Prostate gland (tissue), 2 donors: ENCODE measurements at regions of chr4 and their contacts with region 1.

Region 1: DNA sequence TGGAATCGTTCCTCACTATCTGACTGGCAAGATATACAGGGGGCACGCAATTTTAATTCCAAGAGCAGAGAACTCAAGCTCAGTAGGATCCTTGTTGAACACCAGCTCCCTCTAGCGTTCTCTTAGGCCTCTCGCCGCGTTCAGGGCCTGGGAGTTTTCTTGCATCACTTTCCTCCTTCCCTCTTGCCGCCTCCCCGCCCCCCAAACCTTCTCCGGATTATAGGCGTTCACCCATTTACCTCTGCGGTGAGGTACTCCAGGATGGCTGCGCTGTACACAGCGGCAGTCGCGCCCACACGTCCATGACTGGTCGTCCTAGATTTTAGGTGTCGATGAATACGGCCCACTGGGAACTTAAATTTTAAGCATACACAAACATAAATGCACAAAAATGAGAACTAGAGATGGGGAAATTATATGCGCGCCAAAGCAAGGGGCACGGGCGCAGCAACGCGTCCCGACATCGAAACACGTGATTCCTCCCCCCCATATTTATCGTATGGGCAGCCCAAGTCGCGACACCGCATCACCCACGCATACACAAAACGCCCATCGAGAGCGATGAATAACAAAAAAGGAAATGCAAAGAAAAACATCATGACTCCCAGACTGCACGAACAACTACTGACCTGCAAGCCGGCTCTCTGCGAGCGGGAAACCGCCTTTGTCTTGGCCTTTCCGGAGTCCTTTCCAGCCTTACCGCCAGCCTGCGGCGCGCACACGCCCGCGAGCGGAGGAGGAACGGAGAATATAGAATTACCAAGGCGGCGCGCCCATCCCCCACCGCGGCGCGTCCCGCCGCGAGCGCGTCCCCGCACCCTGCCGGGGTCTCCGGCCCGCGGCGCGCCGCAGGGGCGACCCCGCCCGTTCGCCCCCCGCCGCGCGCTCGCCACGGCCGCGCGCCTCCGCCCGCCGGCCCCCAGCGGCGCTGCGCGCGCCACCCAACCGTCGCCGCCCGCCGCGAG is 759 bp downstream of the H2AZ1 start:
- DNase-seq: peak; percentile 93
- H3K4me3 ChIP-seq: peak overlapping the region; percentile 72 to 82
- H3K27ac ChIP-seq: peak overlapping the region; percentile 94 to 97
- H3K4me1 ChIP-seq: peaks cover 6% of the 10 kb centered on the region
- H3K27me3 ChIP-seq: no peaks in the 10 kb centered on the region
- CTCF ChIP-seq: peak in 3 of 4 experiments; percentile 81 to 88 (median 88)
- POLR2A ChIP-seq: peak; percentile 43

Region 2: GRCh38 chr4:99885063-99885664 is 64.2 kb before region 1 on chr4:
- intact Hi-C with region 1: loop called (anchors 2 kb)
- DNase-seq: no peak
- H3K4me3 ChIP-seq: no peak overlapping the region
- H3K27ac ChIP-seq: no peak overlapping the region
- H3K4me1 ChIP-seq: no peaks in the 10 kb centered on the region
- H3K27me3 ChIP-seq: peaks cover 2% of the 10 kb centered on the region
- CTCF ChIP-seq: peak in 3 of 4 experiments; percentile 33 to 73 (median 60)
- POLR2A ChIP-seq: no peak

Region 3: DNA sequence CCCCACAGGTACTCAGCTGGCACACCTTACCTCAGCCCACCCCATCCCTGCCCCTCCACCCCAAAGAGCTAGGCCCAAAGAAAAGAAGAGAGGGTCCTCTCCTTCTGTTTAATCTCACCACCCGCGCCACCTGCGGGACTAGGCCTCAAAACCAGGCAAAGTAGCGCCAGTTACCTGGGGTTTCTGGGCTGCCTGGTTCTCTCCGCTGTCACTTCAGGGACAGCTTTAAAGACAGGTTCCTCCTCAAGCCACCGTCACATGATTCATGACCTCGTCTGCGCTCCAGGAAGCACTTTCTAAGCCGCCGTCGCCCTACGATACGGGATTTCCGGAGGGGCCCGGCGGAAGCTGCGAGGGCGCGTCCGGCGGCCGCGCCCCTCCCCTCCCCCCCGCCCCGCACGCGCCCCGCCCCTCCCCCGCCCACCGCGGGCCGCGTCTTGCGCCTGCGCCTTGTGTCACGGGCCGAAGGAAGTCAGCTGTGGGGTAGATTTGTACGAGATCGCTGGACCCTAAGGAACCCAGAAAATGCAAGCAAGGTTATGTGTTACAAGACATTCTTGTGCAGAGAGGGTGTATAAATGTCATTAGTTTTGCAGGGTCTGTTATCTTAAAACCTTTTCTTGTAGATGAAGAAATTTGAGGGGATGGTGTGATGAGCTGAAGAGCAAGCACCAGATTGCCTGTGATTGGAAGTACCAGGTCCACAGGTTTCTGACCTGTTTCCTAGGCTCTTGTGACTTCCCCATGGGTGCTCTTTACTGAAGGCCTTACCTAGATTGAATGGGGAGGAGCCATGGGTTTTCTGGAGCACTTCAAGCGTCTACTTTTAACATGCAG is 54.9 kb before region 1 on chr4 and contains the start of gene LAMTOR3:
- intact Hi-C with region 1: loop called (anchors 2 kb)
- DNase-seq: peak; percentile 90
- H3K4me3 ChIP-seq: peak within 1 kb of the TSS; percentile 71 to 78
- H3K27ac ChIP-seq: peak within 1 kb of the TSS; percentile 84 to 85
- H3K4me1 ChIP-seq: no peaks in the 10 kb centered on the region
- H3K27me3 ChIP-seq: no peaks in the 10 kb centered on the region
- CTCF ChIP-seq: no peak
- POLR2A ChIP-seq: peak; percentile 44
- total RNA-seq, gene LAMTOR3: 51.6 to 78.7 TPM